PC-9 (cell line): ENCODE measurements at regions of chrX and their contacts with region 1.

Region 1: GRCh38 chrX:129982274-129983251 is at the start of gene BCORL1:
- DNase-seq: peak; percentile 85 to 93
- H3K4me3 ChIP-seq: no peak within 1 kb of the TSS; the same call in 1 of the 2 replicates
- H3K27ac ChIP-seq: no peak within 1 kb of the TSS
- H3K4me1 ChIP-seq: 0 out of 2 replicates have a peak, but pooled peaks cover 5% of the 10 kb centered on the region
- H3K27me3 ChIP-seq: peaks cover 5% of the 10 kb centered on the region; the same call in 1 of the 2 replicates
- CTCF ChIP-seq: no peak
- total RNA-seq, gene BCORL1: 32.2 TPM in 2 replicates

Region 2: GRCh38 chrX:129843459-129844306 is 138.9 kb before region 1 on chrX and contains the start of gene ZDHHC9:
- CTCF ChIA-PET with region 1: no interaction called
- POLR2A ChIA-PET with region 1: interaction called, 5 read pairs
- intact Hi-C with region 1: loop called (anchors 5 kb)
- DNase-seq: peak; percentile 86 to 96
- H3K4me3 ChIP-seq: peak within 1 kb of the TSS; percentile 90
- H3K27ac ChIP-seq: peak within 1 kb of the TSS; percentile 97
- H3K4me1 ChIP-seq: peaks cover 52% of the 10 kb centered on the region
- H3K27me3 ChIP-seq: no peaks in the 10 kb centered on the region
- CTCF ChIP-seq: 0 out of 2 replicates have a peak, but pooled peaks have one; percentile 25
- total RNA-seq, gene ZDHHC9: 84.2 and 108 TPM in 2 replicates

Region 3: DNA sequence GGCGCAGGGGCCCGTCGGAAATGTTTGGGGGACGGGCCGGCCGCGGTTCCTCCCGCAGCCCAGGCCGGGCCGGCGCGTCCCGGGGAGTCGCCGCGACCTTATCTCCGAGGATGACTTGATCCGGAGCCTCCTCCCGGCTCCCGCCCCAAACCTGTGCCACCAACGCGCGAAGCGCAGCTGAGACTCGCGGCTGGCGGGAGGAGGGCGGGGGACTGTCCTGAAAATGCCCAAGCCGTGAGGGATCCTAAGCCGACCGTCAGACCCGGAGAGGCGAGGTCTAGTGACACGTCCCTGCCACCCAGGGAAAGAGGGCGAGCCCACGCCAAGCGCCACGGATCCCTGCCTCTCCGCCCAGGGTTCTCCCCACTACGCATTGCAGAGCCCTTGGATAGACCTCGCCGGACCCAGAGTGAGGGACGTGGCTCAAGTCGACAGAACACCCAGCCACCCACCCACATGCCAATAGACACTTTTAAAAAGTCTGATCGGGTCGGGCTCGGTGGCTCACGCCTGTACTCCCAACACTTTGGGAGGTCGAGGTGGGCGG is 49.7 kb before region 1 on chrX:
- CTCF ChIA-PET with region 1: no interaction called
- POLR2A ChIA-PET with region 1: interaction called, 6 read pairs
- intact Hi-C with region 1: loop called (anchors 1 kb)
- DNase-seq: peak in 1 of 2 experiments; percentile 35
- H3K4me3 ChIP-seq: peak overlapping the region; percentile 47; the same call in 1 of the 2 replicates
- H3K27ac ChIP-seq: no peak overlapping the region
- H3K4me1 ChIP-seq: no peaks in the 10 kb centered on the region
- H3K27me3 ChIP-seq: peaks cover 22% of the 10 kb centered on the region
- CTCF ChIP-seq: no peak

Region 4: GRCh38 chrX:129961180-129962083 is 21.1 kb before region 1 on chrX:
- CTCF ChIA-PET with region 1: interaction called, 10 read pairs
- POLR2A ChIA-PET with region 1: interaction called, 4 read pairs
- intact Hi-C with region 1: loop called (anchors 2 kb)
- DNase-seq: peak; percentile 68 to 79
- H3K4me3 ChIP-seq: peak overlapping the region; percentile 48; the same call in 1 of the 2 replicates
- H3K27ac ChIP-seq: no peak overlapping the region
- H3K4me1 ChIP-seq: peaks cover 13% of the 10 kb centered on the region
- H3K27me3 ChIP-seq: no peaks in the 10 kb centered on the region
- CTCF ChIP-seq: no peak

Region 5: DNA sequence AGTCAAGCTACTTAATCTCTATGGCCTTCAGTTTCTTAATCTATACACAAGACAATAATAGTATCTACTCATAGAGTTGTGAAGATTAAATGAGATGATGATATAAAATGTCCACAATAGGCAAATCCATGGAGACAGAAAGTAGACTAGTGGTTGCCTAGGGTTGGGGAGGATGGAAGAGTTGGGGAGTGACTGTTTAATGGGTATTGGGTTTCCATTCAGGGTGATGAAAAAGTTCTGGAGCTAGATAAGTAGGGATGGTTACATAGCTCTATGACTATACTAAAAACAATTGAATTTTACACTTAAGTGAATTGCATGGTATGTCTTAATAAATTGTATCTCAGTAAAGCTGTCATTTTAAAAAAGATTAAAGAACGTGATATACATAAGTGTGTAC is 35.6 kb after region 1 on chrX:
- CTCF ChIA-PET with region 1: no interaction called
- POLR2A ChIA-PET with region 1: interaction called, 32 read pairs
- intact Hi-C with region 1: no loop called
- DNase-seq: no peak
- H3K4me3 ChIP-seq: no peak overlapping the region
- H3K27ac ChIP-seq: no peak overlapping the region
- H3K4me1 ChIP-seq: no peaks in the 10 kb centered on the region
- H3K27me3 ChIP-seq: no peaks in the 10 kb centered on the region
- CTCF ChIP-seq: no peak

Region 6: GRCh38 chrX:130039847-130040246 is 57.3 kb after region 1 on chrX:
- CTCF ChIA-PET with region 1: no interaction called
- POLR2A ChIA-PET with region 1: no interaction called
- intact Hi-C with region 1: no loop called
- DNase-seq: no peak
- H3K4me3 ChIP-seq: no peak overlapping the region
- H3K27ac ChIP-seq: no peak overlapping the region
- H3K4me1 ChIP-seq: no peaks in the 10 kb centered on the region
- H3K27me3 ChIP-seq: no peaks in the 10 kb centered on the region
- CTCF ChIP-seq: no peak

Region 7: GRCh38 chrX:130110379-130111219 is 128.0 kb after region 1 on chrX and contains the start of gene ELF4:
- CTCF ChIA-PET with region 1: no interaction called
- POLR2A ChIA-PET with region 1: no interaction called
- intact Hi-C with region 1: loop called (anchors 5 kb)
- DNase-seq: peak; percentile 77 to 86
- H3K4me3 ChIP-seq: peak within 1 kb of the TSS; percentile 94
- H3K27ac ChIP-seq: peak within 1 kb of the TSS; percentile 92
- H3K4me1 ChIP-seq: peaks cover 76% of the 10 kb centered on the region
- H3K27me3 ChIP-seq: no peaks in the 10 kb centered on the region
- CTCF ChIP-seq: no peak
- total RNA-seq, gene ELF4: 53.0 and 60.3 TPM in 2 replicates

Region 8: GRCh38 chrX:130176354-130176776 is 193.8 kb after region 1 on chrX:
- CTCF ChIA-PET with region 1: no interaction called
- POLR2A ChIA-PET with region 1: no interaction called
- intact Hi-C with region 1: no loop called
- DNase-seq: no peak
- H3K4me3 ChIP-seq: no peak overlapping the region
- H3K27ac ChIP-seq: no peak overlapping the region
- H3K4me1 ChIP-seq: peaks cover 28% of the 10 kb centered on the region
- H3K27me3 ChIP-seq: no peaks in the 10 kb centered on the region
- CTCF ChIP-seq: no peak